GM12878 (cell line): ENCODE measurements at regions of chr6 and their contacts with region 1.

Region 1: GRCh38 chr6:3251462-3252314 is 7.1 kb upstream of the PSMG4 start:
- DNase-seq: peak; percentile 30
- ATAC-seq: peak; percentile 98
- H3K4me3 ChIP-seq: no peak overlapping the region
- H3K27ac ChIP-seq: no peak overlapping the region
- H3K4me1 ChIP-seq: no peaks in the 10 kb centered on the region
- H3K27me3 ChIP-seq: peaks cover 0 to 6% of the 10 kb centered on the region in 2 experiments; a peak in 3 of 4 replicates
- CTCF ChIP-seq: peak; percentile 91 to 98 (median 98)
- EP300 ChIP-seq: no peak
- POLR2A ChIP-seq: no peak
- RAD21 ChIP-seq: peak; percentile 89

Region 2: DNA sequence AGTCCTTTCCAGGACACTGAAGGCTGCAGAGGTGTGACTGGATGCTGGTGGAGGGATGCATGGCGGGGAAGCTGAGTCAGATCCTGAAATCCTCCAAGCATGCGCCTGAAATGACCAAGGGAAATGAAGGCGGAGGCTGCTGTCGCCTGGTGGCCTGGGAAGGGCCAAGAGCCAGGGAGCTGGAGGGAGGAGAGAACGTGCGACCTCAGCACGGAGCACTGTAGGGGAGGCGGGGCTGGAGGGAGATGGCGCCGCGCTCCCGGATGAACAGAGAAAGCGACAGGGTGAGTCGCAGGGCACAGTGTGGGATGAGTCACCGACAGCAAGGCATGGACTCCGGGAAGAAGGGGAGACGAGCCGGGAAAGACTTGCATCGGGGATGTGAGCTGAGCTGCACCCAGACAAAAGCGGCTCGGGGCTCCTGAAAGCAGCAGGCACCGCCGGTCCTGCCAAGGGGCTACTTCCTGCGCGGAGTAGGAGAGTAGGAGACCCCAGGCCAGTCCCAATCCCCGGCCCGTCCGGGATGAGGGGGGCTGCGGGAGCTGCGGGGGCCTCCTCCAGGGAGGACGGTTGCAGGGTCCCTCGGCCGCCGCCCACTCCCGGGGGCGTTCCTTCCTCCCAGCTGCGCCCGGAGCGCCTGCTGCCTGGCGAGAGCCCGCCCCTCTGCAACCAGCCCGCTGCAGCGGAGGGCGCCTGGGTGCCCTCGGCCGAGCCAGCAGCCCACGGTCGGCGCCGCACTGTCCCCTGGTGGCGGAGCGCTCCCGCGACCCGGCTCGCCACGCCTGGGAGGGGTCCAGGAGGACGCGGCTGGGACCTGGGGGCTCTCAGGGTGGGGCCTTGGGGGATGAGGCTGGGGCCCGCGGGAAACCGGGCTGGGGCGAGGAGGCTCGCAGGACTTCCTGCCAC is 263.0 kb before region 1 on chr6:
- CTCF ChIA-PET with region 1: interaction called, 3 read pairs
- POLR2A ChIA-PET with region 1: no interaction called
- RAD21 ChIA-PET with region 1: no interaction called
- SMC1A ChIA-PET with region 1: no interaction called
- in situ Hi-C with region 1: loop called (anchors 5 kb)
- intact Hi-C with region 1: no loop called
- DNase-seq: no peak
- ATAC-seq: peak; percentile 92
- H3K4me3 ChIP-seq: peak overlapping the region; percentile 71
- H3K27ac ChIP-seq: peak overlapping the region; percentile 79
- H3K4me1 ChIP-seq: peaks cover 13% of the 10 kb centered on the region
- H3K27me3 ChIP-seq: peaks cover 0 to 2% of the 10 kb centered on the region in 2 experiments; a peak in 3 of 4 replicates
- CTCF ChIP-seq: peak; percentile 56 to 75 (median 73)
- EP300 ChIP-seq: no peak; a peak in 1 of 4 replicates
- POLR2A ChIP-seq: peak; percentile 64
- RAD21 ChIP-seq: peak; percentile 73

Region 3: DNA sequence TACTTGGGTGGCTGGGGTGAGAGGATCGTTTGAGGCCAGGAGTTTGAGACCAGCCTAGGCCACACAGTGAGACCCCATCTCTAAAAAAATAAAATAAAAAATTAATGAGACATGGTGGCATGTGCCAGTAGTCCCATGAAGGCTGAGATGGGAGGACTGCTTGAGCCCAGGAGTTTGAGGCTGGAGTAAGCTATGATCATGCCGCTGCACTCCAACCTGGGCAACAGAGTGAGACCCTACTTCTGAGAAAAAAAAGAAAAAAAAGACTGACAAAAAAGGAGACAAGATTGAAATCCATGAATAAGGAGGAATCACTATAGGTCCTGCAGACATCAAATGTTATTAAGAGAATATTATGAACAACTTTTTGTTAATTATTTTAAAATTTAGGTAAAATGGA is 156.9 kb before region 1 on chr6:
- CTCF ChIA-PET with region 1: no interaction called
- POLR2A ChIA-PET with region 1: no interaction called
- RAD21 ChIA-PET with region 1: no interaction called
- SMC1A ChIA-PET with region 1: no interaction called
- in situ Hi-C with region 1: no loop called
- intact Hi-C with region 1: no loop called
- DNase-seq: no peak
- ATAC-seq: no peak
- H3K4me3 ChIP-seq: no peak overlapping the region
- H3K27ac ChIP-seq: no peak overlapping the region
- H3K4me1 ChIP-seq: no peaks in the 10 kb centered on the region
- H3K27me3 ChIP-seq: no peaks in the 10 kb centered on the region
- CTCF ChIP-seq: no peak
- EP300 ChIP-seq: no peak
- POLR2A ChIP-seq: no peak
- RAD21 ChIP-seq: no peak

Region 4: GRCh38 chr6:3118353-3119039 is 133.2 kb before region 1 on chr6 and contains the start of gene BPHL:
- CTCF ChIA-PET with region 1: interaction called, 16 read pairs
- POLR2A ChIA-PET with region 1: interaction called, 3 read pairs
- RAD21 ChIA-PET with region 1: interaction called, 9 read pairs
- SMC1A ChIA-PET with region 1: interaction called, 32 read pairs
- in situ Hi-C with region 1: no loop called
- intact Hi-C with region 1: no loop called
- DNase-seq: peak; percentile 75
- ATAC-seq: peak; percentile 97
- H3K4me3 ChIP-seq: peak within 1 kb of the TSS; percentile 87
- H3K27ac ChIP-seq: peak within 1 kb of the TSS; percentile 86
- H3K4me1 ChIP-seq: peaks cover 6% of the 10 kb centered on the region; the same call in 1 of the 2 replicates
- H3K27me3 ChIP-seq: no peaks in the 10 kb centered on the region
- CTCF ChIP-seq: no peak
- EP300 ChIP-seq: no peak
- POLR2A ChIP-seq: peak; percentile 90
- RAD21 ChIP-seq: no peak
- polyA plus RNA-seq, gene BPHL: 8.0 to 12.9 TPM

Region 5: GRCh38 chr6:3131695-3132094 is 120.0 kb before region 1 on chr6:
- CTCF ChIA-PET with region 1: interaction called, 61 read pairs
- POLR2A ChIA-PET with region 1: interaction called, 4 read pairs
- RAD21 ChIA-PET with region 1: interaction called, 4 read pairs
- SMC1A ChIA-PET with region 1: interaction called, 32 read pairs
- in situ Hi-C with region 1: loop called (anchors 5 kb)
- intact Hi-C with region 1: loop called (anchors 1 kb)
- DNase-seq: no peak
- ATAC-seq: no peak
- H3K4me3 ChIP-seq: no peak overlapping the region
- H3K27ac ChIP-seq: no peak overlapping the region
- H3K4me1 ChIP-seq: no peaks in the 10 kb centered on the region; the same call in 1 of the 2 replicates
- H3K27me3 ChIP-seq: no peaks in the 10 kb centered on the region
- CTCF ChIP-seq: no peak
- EP300 ChIP-seq: no peak
- POLR2A ChIP-seq: no peak
- RAD21 ChIP-seq: no peak

Region 6: DNA sequence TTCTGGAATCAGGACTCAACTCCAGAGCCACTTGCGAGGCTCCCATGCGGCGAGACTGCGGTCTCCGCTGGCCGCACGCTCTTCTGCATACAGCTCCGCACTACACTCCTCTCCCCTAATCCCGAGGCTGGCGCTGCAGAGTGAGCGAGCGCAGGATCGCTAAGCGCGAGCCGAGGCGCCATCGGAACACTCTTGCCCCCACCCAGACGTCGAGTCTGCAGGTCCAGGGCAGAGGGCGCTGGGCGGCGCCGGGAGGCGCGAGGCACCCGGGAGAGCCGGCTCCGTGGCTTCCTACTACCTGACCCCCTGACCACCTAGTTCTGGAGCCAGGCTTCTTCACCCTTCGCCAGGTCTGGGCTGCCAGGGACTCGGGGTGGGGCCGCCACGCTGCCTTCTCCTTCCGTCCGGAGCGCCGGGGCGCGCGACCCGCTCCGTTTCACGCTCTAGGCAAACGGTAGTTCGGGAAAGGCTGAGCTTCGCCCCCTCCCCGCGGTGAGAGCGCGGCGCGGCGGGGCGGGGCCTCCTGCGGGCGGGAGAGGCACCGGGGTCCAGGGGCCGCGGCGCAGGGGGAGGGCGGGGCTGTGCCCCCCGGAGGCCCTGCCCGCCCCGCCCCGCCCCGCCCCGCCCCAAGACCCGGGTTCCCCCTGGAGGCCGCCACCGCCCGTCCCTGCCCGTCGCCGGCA is 89.0 kb before region 1 on chr6:
- CTCF ChIA-PET with region 1: interaction called, 12 read pairs
- POLR2A ChIA-PET with region 1: no interaction called
- RAD21 ChIA-PET with region 1: interaction called, 5 read pairs
- SMC1A ChIA-PET with region 1: interaction called, 3 read pairs
- in situ Hi-C with region 1: no loop called
- intact Hi-C with region 1: no loop called
- DNase-seq: no peak
- ATAC-seq: peak; percentile 90
- H3K4me3 ChIP-seq: peak overlapping the region; percentile 63; the same call in 1 of the 2 replicates
- H3K27ac ChIP-seq: peak overlapping the region; percentile 33; the same call in 1 of the 2 replicates
- H3K4me1 ChIP-seq: peaks cover 5% of the 10 kb centered on the region
- H3K27me3 ChIP-seq: peaks cover 0 to 2% of the 10 kb centered on the region in 2 experiments; a peak in 1 of 4 replicates
- CTCF ChIP-seq: no peak; a peak in 1 of 6 replicates
- EP300 ChIP-seq: no peak
- POLR2A ChIP-seq: no peak; the same call in 1 of the 2 replicates
- RAD21 ChIP-seq: no peak

Region 7: GRCh38 chr6:3239110-3239830 is 12.4 kb before region 1 on chr6:
- CTCF ChIA-PET with region 1: interaction called, 21 read pairs
- POLR2A ChIA-PET with region 1: interaction called, 3 read pairs
- RAD21 ChIA-PET with region 1: interaction called, 6 read pairs
- SMC1A ChIA-PET with region 1: interaction called, 4 read pairs
- in situ Hi-C with region 1: no loop called
- intact Hi-C with region 1: no loop called
- DNase-seq: no peak
- ATAC-seq: no peak
- H3K4me3 ChIP-seq: no peak overlapping the region
- H3K27ac ChIP-seq: no peak overlapping the region
- H3K4me1 ChIP-seq: peaks cover 31% of the 10 kb centered on the region
- H3K27me3 ChIP-seq: no peaks in the 10 kb centered on the region; a peak in 1 of 4 replicates
- CTCF ChIP-seq: 0 out of 6 replicates have a peak, but pooled peaks of 1 of the 3 experiments have one; percentile 7
- EP300 ChIP-seq: no peak
- POLR2A ChIP-seq: no peak
- RAD21 ChIP-seq: no peak